ENCODE measurements at regions of chr10 and their contacts with region 1.

Region 1: DNA sequence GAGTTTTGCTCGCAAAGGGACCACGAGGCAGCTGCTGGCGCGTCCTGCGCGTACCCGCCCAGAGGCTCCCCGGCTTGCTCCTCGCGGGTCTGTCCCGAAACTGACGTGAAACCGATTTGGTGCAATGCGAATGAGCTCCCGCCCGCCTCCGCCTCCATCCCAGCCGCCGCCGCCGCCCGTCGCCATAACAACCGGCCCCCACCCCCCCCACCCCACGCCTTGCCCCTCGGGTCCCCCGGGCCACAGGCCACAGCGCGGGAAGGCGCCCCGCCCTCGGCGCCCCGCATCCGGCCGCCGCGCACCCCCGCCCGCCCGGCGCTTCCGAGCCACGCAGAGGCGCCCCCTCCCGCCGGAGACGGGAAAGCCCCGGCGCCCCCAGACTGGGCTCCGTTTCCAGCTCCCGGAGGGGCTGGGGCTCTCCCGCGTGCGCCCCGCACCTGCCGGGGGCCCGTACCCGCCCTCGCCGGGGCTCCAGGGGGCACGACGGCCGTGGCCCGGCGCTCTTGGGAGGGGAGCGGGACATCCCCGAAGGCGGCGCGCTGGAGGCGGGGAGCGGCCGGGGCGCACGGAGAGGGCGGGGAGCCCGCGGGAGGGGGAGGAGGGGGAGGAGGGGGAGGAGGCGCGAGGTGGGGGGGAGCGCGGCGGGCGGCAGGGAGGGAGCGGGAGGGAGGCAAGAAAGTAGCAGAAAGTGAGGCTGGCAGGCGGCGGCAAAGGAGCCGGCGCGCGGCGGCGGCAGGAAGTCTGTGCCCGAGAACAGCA is at the start of gene CAMK1D:
- DNase-seq: peak; percentile 90
- CTCF ChIP-seq: peak; percentile 26

Region 2: DNA sequence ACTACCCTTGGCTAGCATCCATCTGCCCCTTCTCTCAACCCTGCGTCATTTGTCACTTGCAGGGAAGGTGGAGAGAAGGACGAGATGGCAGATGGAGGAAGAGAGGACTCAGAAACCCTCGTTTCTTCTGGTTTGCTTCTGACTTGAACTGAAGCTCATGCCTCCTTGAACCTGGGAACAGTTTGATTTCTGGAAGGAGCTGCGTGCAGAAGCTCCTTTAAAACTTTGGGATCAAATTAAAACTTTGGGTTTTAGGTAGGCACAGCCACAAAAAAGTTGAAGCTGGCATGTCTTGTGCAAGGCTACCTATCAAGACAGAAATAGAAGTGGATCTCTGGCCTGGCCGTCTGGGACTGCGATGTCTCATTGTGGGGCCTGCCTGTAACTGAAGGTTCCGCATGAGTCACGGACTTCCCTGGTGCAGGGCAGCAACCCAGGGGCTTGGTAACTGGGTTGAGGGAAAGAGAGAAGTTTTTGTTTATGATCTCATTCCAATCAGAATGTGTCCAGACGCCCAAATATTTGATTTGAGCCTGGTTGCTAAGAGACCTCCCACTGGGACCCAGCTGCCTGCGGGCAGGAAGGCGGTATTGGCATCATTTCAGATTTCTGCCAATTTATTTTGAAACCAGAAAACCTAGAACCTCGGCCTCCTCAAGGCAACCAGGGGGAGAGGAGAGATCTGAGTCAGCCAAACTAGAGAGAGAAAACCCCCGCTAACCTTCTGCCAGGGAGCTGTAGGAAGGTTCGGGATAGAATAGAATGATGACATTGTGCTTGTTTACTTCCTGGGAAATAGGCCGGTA is 15.5 kb before region 1 on chr10:
- CTCF ChIA-PET with region 1: interaction called, 14 read pairs
- POLR2A ChIA-PET with region 1: interaction called, 5 read pairs
- DNase-seq: peak; percentile 68
- CTCF ChIP-seq: no peak

Region 3: GRCh38 chr10:12364559-12364958 is 15.5 kb after region 1 on chr10:
- CTCF ChIA-PET with region 1: interaction called, 10 read pairs
- POLR2A ChIA-PET with region 1: no interaction called
- DNase-seq: no peak
- CTCF ChIP-seq: no peak

Region 4: DNA sequence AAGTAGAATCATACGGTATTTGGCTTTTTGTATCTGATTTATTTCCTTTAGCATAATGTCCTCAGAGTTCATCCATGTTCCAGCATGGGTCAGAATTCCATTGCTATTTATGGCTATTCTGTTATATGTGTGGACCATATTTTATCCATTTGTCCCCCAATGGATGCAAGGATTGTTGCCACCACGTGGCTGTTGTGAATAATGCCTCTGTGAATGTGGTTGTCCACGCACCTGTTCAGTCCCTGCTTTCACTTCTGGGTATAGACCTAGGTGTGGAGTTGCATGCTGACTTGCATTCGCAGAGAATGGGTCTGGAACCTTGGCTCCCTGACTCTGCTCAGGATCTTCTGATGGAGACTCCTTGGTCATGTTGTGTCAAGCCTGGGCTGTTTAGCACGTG is 200.2 kb after region 1 on chr10:
- CTCF ChIA-PET with region 1: no interaction called
- POLR2A ChIA-PET with region 1: no interaction called
- DNase-seq: peak; percentile 40
- CTCF ChIP-seq: no peak

Measured in GM10248 (cell line).